ENCODE measurements at regions of chr15 and their contacts with region 1.

Region 1: GRCh38 chr15:73704869-73705645 is 20.9 kb downstream of the CD276 start:
- DNase-seq: no peak
- H3K4me3 ChIP-seq: no peak overlapping the region
- H3K27ac ChIP-seq: no peak overlapping the region
- H3K27me3 ChIP-seq: no peaks in the 10 kb centered on the region
- CTCF ChIP-seq: peak; percentile 83

Region 2: DNA sequence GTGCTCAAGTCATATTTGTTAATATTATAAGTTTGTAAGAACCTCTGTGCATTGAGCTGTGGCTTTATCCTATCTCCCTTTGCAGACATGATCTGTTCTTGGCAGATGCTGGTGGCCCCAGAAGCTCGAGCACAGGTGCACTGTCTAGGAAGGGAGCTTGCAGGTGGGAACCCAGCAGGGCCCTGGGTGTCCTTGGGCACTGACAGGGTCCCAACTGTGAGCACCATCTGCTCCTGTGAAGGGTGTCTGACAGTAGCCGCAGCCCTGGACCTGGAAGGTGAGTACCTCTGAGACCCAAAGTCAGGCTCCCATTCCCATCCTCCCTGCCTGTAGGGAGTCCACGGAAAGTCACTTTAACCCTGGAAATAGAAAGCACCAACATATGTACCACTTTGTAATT is 264.5 kb before region 1 on chr15:
- CTCF ChIA-PET with region 1: no interaction called
- POLR2A ChIA-PET with region 1: no interaction called
- DNase-seq: no peak
- H3K4me3 ChIP-seq: no peak overlapping the region
- H3K27ac ChIP-seq: no peak overlapping the region
- H3K27me3 ChIP-seq: peaks cover 8% of the 10 kb centered on the region
- CTCF ChIP-seq: no peak

Region 3: GRCh38 chr15:73560501-73561117 is 144.4 kb before region 1 on chr15:
- CTCF ChIA-PET with region 1: interaction called, 117 read pairs
- POLR2A ChIA-PET with region 1: no interaction called
- DNase-seq: peak; percentile 55
- H3K4me3 ChIP-seq: no peak overlapping the region
- H3K27ac ChIP-seq: no peak overlapping the region
- H3K27me3 ChIP-seq: no peaks in the 10 kb centered on the region
- CTCF ChIP-seq: peak; percentile 61

Region 4: GRCh38 chr15:73677146-73677607 is 27.9 kb before region 1 on chr15:
- CTCF ChIA-PET with region 1: interaction called, 92 read pairs
- POLR2A ChIA-PET with region 1: no interaction called
- DNase-seq: no peak
- H3K4me3 ChIP-seq: no peak overlapping the region
- H3K27ac ChIP-seq: no peak overlapping the region
- H3K27me3 ChIP-seq: peaks cover 27% of the 10 kb centered on the region
- CTCF ChIP-seq: peak; percentile 86

Region 5: GRCh38 chr15:73683777-73684580 is 21.1 kb before region 1 on chr15 and contains the start of gene CD276:
- CTCF ChIA-PET with region 1: interaction called, 92 read pairs
- POLR2A ChIA-PET with region 1: interaction called, 3 read pairs
- DNase-seq: no peak
- H3K4me3 ChIP-seq: peak within 1 kb of the TSS; percentile 84
- H3K27ac ChIP-seq: peak within 1 kb of the TSS; percentile 70
- H3K27me3 ChIP-seq: no peaks in the 10 kb centered on the region
- CTCF ChIP-seq: no peak
- polyA plus RNA-seq, gene CD276: 86.4 and 101 TPM in 2 replicates

Region 6: DNA sequence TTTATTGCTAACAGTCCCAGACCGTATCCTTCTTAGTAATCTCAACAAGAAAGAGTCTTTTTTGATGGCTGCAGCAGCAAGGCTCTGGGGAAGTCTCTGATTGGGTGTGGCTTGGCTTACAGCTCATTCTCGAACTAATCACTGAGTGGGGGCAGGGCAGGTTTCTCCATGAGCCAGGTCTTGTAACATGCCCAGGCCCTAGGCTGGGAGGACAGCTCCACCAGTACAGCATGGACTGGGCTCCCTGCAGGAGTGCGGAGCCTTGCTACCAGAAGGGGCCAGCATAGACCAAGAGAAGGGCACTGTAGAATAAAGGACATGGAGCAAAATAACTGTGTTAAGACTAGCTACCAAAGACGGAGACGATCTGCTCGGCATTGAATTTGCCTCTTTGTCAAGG is 13.7 kb before region 1 on chr15:
- CTCF ChIA-PET with region 1: interaction called, 35 read pairs
- POLR2A ChIA-PET with region 1: no interaction called
- DNase-seq: no peak
- H3K4me3 ChIP-seq: no peak overlapping the region
- H3K27ac ChIP-seq: no peak overlapping the region
- H3K27me3 ChIP-seq: no peaks in the 10 kb centered on the region
- CTCF ChIP-seq: 0 out of 2 replicates have a peak, but pooled peaks have one; percentile 6

Region 7: GRCh38 chr15:73717802-73718201 is 12.7 kb after region 1 on chr15:
- CTCF ChIA-PET with region 1: interaction called, 33 read pairs
- POLR2A ChIA-PET with region 1: no interaction called
- DNase-seq: no peak
- H3K4me3 ChIP-seq: no peak overlapping the region
- H3K27ac ChIP-seq: no peak overlapping the region
- H3K27me3 ChIP-seq: peaks cover 11% of the 10 kb centered on the region
- CTCF ChIP-seq: no peak

Region 8: DNA sequence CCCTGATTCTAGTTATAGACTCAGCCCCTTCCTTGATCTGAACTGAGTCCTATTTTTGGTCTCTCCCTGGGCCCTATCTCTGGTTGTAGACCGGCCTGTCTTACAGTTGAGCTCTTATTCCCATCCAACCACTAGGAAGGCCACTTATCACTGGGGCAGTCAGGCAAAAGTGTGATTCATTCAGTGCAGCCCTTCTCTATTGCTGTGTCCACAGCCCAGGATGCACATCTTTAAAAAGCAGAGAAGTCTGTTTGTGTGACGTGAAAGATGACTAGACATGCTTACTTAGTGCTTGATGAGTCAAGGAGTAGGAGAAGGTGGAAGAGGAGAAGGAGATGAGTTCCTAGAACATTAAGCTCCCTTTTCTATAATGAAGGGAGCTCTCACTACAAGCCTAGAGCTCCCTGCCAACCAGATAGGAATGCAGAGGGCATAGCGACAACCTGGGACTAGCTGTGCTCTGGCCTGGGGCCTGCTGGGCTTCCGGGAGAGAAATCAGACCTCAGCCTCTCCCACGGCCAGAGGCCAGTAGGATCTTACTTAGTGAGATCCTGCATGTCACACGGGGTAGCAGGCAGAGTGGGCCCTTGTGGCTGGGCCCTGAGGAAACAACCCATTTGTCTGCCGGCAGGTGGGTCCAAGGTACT is 22.4 kb after region 1 on chr15:
- CTCF ChIA-PET with region 1: interaction called, 33 read pairs
- POLR2A ChIA-PET with region 1: no interaction called
- DNase-seq: peak; percentile 52
- H3K4me3 ChIP-seq: no peak overlapping the region
- H3K27ac ChIP-seq: no peak overlapping the region
- H3K27me3 ChIP-seq: peaks cover 9% of the 10 kb centered on the region
- CTCF ChIP-seq: no peak

Measured in AG04450 (cell line).